ENCODE measurements at regions of chr10 and their contacts with region 1.

Region 1: DNA sequence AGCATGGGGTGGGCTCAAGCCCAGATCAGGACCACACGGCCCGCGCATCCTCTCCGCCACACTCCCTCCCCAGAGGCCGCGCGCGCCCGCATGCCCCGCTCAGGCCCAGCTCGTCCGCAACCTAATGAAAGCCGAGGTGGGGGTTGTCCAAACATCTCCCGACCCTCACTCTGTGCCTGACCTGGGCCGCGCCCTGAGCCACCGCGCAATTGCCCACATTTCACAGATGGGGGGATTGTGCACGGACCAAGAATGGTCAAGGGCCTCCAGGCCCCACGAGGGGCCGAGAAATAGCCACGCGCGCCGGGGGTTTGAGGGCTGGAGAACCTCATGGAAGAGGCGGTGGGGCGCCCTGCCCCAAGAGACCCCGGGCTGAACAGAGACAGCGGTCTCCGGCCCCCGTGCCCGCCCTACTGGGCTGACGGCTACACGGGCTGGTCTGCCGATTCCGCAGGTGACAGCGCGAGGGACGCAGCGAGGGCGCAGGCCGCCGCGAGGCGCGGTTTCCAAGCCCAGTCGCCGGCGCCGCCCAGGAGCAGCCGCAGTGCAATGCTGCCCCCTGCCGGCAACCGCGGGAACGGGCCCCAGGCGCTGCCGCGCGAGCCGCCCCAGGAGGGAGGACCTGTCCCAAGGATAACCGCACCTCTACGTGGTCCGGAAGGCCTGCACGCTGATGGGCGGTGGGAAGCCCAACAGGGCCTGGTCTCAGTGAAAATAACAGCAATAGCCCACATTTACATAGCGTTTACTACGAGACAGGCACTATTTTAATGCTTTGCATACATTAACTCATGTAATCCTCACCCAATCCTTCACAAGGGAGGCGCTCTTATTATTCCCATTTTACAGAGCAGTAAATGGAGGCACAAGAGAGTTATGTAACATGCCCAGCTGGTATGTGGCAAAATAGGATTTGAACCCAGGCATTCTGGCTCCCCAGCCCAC is 10.5 kb upstream of the GRID1 start:
- DNase-seq: peak; percentile 45
- ATAC-seq: peak; percentile 97
- H3K4me3 ChIP-seq: no peak overlapping the region
- H3K27ac ChIP-seq: no peak overlapping the region
- H3K4me1 ChIP-seq: no peaks in the 10 kb centered on the region
- H3K27me3 ChIP-seq: peaks cover 8 to 51% of the 10 kb centered on the region in 2 experiments
- CTCF ChIP-seq: peak; percentile 95
- EP300 ChIP-seq: no peak
- POLR2A ChIP-seq: no peak
- RAD21 ChIP-seq: peak; percentile 99

Region 2: GRCh38 chr10:84783386-84783785 is 1593.7 kb before region 1 on chr10:
- CTCF ChIA-PET with region 1: no interaction called
- POLR2A ChIA-PET with region 1: no interaction called
- in situ Hi-C with region 1: no loop called
- intact Hi-C with region 1: loop called (anchors 5 kb)
- DNase-seq: peak; percentile 17
- ATAC-seq: peak; percentile 92
- H3K4me3 ChIP-seq: no peak overlapping the region
- H3K27ac ChIP-seq: no peak overlapping the region
- H3K4me1 ChIP-seq: no peaks in the 10 kb centered on the region
- H3K27me3 ChIP-seq: no peaks in the 10 kb centered on the region
- CTCF ChIP-seq: peak; percentile 74
- EP300 ChIP-seq: no peak
- POLR2A ChIP-seq: no peak
- RAD21 ChIP-seq: no peak

Region 3: DNA sequence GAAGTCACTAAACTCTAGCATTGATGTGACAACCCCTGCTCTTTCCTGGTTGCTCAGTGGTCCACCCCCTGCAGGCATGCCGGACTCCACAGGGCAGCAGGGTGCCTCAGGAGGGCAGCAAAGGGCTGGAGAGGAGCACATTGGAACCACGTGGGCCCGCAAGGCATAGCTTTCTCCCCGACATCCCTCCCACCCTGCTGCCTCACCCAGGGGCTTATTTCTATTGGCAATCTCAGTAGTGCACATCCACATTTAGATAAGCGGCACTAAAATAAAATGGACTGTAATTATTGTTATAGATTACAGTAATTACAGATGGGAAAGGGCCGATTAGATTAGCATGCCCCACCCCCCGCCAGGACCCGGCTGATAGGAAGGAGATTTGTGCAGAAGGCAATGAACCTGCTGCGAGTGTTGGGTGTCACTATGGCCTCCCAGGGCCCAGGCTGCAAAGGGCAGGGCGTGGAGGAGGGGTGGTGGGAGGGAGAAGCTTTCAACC is 590.7 kb before region 1 on chr10:
- CTCF ChIA-PET with region 1: no interaction called
- POLR2A ChIA-PET with region 1: no interaction called
- in situ Hi-C with region 1: no loop called
- intact Hi-C with region 1: loop called (anchors 5 kb)
- DNase-seq: no peak
- ATAC-seq: peak; percentile 95
- H3K4me3 ChIP-seq: no peak overlapping the region
- H3K27ac ChIP-seq: no peak overlapping the region
- H3K4me1 ChIP-seq: no peaks in the 10 kb centered on the region
- H3K27me3 ChIP-seq: peaks cover 1 to 2% of the 10 kb centered on the region in 2 experiments; a peak in 2 of 5 replicates
- CTCF ChIP-seq: peak; percentile 60
- EP300 ChIP-seq: no peak
- POLR2A ChIP-seq: no peak
- RAD21 ChIP-seq: no peak

Region 4: GRCh38 chr10:86178401-86179152 is 198.5 kb before region 1 on chr10:
- CTCF ChIA-PET with region 1: no interaction called
- POLR2A ChIA-PET with region 1: no interaction called
- in situ Hi-C with region 1: loop called (anchors 5 kb)
- intact Hi-C with region 1: loop called (anchors 2 kb)
- DNase-seq: peak; percentile 24
- ATAC-seq: peak; percentile 98
- H3K4me3 ChIP-seq: no peak overlapping the region
- H3K27ac ChIP-seq: no peak overlapping the region
- H3K4me1 ChIP-seq: no peaks in the 10 kb centered on the region
- H3K27me3 ChIP-seq: peaks cover 0 to 24% of the 10 kb centered on the region in 2 experiments; a peak in 2 of 5 replicates
- CTCF ChIP-seq: peak; percentile 57
- EP300 ChIP-seq: no peak
- POLR2A ChIP-seq: no peak
- RAD21 ChIP-seq: no peak

Region 5: GRCh38 chr10:86261941-86262687 is 115.0 kb before region 1 on chr10:
- CTCF ChIA-PET with region 1: no interaction called
- POLR2A ChIA-PET with region 1: no interaction called
- in situ Hi-C with region 1: loop called (anchors 10 kb)
- intact Hi-C with region 1: loop called (anchors 5 kb)
- DNase-seq: peak; percentile 5
- ATAC-seq: peak; percentile 92
- H3K4me3 ChIP-seq: no peak overlapping the region
- H3K27ac ChIP-seq: no peak overlapping the region
- H3K4me1 ChIP-seq: no peaks in the 10 kb centered on the region
- H3K27me3 ChIP-seq: peaks cover 3 to 42% of the 10 kb centered on the region in 2 experiments; a peak in 4 of 5 replicates
- CTCF ChIP-seq: peak; percentile 50
- EP300 ChIP-seq: no peak
- POLR2A ChIP-seq: no peak
- RAD21 ChIP-seq: no peak

Region 6: DNA sequence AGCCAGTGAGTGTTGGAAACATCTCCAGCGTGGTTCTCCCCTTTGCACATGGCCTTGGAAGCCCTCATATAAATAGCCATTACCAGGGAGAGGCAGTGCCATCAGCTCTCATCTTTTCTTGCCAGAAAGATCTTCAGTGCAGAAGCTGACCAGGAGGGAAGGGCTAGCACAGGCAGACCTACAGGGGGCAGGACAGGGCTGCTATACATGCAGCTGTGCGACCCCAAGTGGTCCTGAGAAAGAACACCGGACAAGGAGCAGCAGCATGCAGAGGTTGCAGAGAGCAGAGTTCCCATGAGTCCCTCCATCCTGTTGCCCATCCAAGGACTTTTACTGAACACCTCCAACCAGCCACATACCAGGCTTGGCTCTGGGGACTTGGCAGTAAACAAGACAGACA is 27.6 kb before region 1 on chr10:
- CTCF ChIA-PET with region 1: interaction called, 26 read pairs
- POLR2A ChIA-PET with region 1: no interaction called
- in situ Hi-C with region 1: no loop called
- intact Hi-C with region 1: loop called (anchors 2 kb)
- DNase-seq: peak; percentile 60
- ATAC-seq: peak; percentile 93
- H3K4me3 ChIP-seq: no peak overlapping the region
- H3K27ac ChIP-seq: no peak overlapping the region
- H3K4me1 ChIP-seq: no peaks in the 10 kb centered on the region
- H3K27me3 ChIP-seq: peaks cover 2 to 17% of the 10 kb centered on the region in 2 experiments; a peak in 2 of 5 replicates
- CTCF ChIP-seq: peak; percentile 73
- EP300 ChIP-seq: no peak
- POLR2A ChIP-seq: no peak
- RAD21 ChIP-seq: peak; percentile 77